ENCODE measurements at regions of chr10 and their contacts with region 1.

Region 1: DNA sequence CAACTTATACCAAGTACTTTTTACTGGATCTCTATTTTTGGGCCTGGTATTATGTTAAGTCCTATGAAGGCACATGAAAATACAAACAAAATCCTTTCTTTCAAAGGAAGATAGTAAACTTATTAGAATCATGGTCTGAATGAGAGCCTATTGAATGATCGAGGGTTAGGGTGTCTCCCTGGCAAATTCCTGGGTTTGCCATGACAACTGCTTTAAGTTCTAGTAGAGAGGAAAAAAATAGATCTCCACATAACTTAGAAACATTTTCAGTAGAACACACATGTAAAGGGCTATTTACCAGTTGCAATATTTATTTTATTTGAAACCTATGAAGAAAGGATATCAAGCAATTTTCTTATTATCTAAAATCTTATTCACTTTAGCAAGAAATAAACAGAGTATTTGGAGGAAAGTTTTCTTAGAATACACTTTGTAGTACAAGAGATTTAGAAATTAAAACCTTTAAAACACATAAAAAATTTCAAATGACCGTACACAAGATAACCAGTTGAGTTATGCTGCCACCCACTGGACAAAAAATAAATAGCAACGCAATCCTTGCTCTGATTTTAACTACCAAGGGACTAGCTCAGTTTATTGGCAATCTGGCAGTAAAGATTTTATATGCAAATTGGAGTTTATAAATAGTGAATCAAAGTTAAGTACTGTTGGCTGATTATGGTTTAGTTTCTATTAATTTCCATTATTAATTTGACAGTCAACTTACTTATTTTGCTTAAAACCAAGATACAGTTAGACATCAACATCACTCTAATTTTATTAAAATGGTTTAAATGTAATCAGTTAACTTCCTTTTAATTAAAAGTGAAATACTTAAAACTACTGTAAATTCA is 33.9 kb downstream of the CACUL1 start:
- DNase-seq: peak; percentile 58 to 74 (median 72)
- ATAC-seq: peak; percentile 53
- H3K4me3 ChIP-seq: no peak overlapping the region
- H3K27ac ChIP-seq: no peak overlapping the region
- H3K4me1 ChIP-seq: peaks cover 19% of the 10 kb centered on the region
- H3K27me3 ChIP-seq: no peaks in the 10 kb centered on the region
- CTCF ChIP-seq: peak; percentile 54 to 91 (median 82)
- POLR2A ChIP-seq: no peak

Region 2: DNA sequence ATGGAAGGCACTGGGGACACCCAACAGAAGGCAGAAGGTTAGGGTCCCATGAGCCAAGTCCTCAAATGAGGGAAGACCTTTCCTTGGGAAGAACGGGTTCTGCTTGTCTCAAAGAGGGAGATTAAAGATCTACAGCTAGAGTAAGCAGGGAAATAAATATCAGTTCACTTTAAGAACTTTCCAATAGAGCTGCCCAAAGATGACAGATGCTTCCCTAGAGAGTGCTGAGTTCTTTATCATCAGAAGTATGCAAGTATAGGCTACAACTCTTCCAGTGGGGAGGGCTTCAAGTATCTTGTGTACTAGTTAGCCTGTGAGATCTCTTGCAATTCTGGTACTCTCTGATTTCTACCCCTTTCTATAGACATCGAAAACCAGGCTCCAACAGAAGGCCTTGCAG is 1139.0 kb before region 1 on chr10:
- intact Hi-C with region 1: no loop called
- DNase-seq: no peak
- ATAC-seq: no peak
- H3K4me3 ChIP-seq: no peak overlapping the region
- H3K27ac ChIP-seq: no peak overlapping the region
- H3K4me1 ChIP-seq: no peaks in the 10 kb centered on the region
- H3K27me3 ChIP-seq: no peaks in the 10 kb centered on the region
- CTCF ChIP-seq: no peak
- POLR2A ChIP-seq: no peak

Region 3: DNA sequence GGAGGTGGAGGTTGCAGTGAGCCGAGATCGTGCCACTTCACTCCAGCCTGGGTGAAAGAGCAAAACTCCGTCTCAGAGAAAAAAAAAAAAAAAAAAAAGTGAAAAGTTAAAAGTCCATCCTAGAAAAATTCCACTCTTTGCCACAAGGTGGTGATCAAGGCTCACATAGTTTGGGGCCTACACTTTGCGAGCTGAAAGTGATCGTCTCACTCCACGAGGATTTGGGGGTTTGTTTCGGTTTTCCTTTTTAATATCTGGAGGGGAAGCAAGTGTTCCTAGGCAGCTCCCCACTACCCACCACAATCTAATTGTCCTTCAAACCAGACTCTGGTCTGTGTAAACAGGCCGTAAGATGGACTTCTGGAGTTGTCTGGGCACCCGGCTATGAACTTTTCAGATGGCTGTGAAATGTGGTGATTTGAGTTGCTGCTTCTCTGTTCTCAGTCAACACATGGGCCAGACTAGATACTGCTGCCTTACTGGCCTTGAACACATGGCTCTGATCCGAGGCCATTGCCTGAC is 152.5 kb before region 1 on chr10:
- intact Hi-C with region 1: loop called (anchors 5 kb)
- DNase-seq: peak; percentile 57 to 80 (median 66)
- ATAC-seq: peak; percentile 76
- H3K4me3 ChIP-seq: no peak overlapping the region
- H3K27ac ChIP-seq: no peak overlapping the region
- H3K4me1 ChIP-seq: peaks cover 20% of the 10 kb centered on the region
- H3K27me3 ChIP-seq: no peaks in the 10 kb centered on the region
- CTCF ChIP-seq: peak; percentile 74 to 98 (median 88)
- POLR2A ChIP-seq: no peak

Measured in body of pancreas (tissue), 4 donors.